ENCODE measurements at regions of chr14 and their contacts with region 1.

Region 1: GRCh38 chr14:23186913-23187654 is 3.6 kb upstream of the SLC7A8 start:
- DNase-seq: peak; percentile 34
- H3K4me3 Mint-ChIP-seq: no peak overlapping the region
- H3K27ac Mint-ChIP-seq: no peak overlapping the region
- H3K4me1 Mint-ChIP-seq: no peaks in the 10 kb centered on the region
- H3K27me3 Mint-ChIP-seq: peaks cover 20% of the 10 kb centered on the region
- CTCF ChIP-seq: peak; percentile 34

Region 2: DNA sequence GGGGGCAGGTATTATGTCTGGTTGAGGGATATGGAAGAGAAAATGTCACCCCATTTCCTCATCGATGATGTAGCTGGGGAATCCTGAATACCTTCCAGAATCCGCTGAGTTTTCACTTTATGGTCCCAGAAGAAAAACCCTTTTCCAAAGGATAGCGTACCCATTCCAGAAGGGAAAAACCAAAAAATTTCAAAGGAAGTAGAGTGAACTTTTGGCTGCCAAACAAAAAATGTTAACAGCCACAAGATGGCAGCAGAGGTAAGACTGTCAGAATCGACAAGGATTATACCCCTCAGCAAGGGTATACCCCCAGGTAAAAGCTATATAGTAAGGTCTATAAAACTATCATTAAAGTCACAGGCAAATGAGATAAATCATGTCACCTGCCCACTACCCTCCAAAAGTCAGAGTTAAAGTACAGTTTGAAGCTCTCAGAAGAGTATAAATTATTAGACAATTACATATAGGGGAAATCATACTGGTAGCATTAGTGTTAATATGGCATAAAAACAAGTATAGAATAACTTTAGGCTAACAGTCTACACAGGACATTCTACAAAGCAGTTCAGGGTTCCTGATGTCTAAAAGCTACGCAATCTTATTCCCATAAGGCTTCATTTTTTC is 110.2 kb before region 1 on chr14:
- CTCF ChIA-PET with region 1: no interaction called
- intact Hi-C with region 1: loop called (anchors 2 kb)
- DNase-seq: no peak
- H3K4me3 Mint-ChIP-seq: no peak overlapping the region
- H3K27ac Mint-ChIP-seq: no peak overlapping the region
- H3K4me1 Mint-ChIP-seq: peaks cover 29% of the 10 kb centered on the region
- H3K27me3 Mint-ChIP-seq: no peaks in the 10 kb centered on the region
- CTCF ChIP-seq: peak; percentile 36

Region 3: GRCh38 chr14:23120541-23121251 is 66.4 kb before region 1 on chr14:
- CTCF ChIA-PET with region 1: interaction called, 46 read pairs
- intact Hi-C with region 1: loop called (anchors 1 kb)
- DNase-seq: peak; percentile 89
- H3K4me3 Mint-ChIP-seq: no peak overlapping the region
- H3K27ac Mint-ChIP-seq: no peak overlapping the region
- H3K4me1 Mint-ChIP-seq: peaks cover 24% of the 10 kb centered on the region
- H3K27me3 Mint-ChIP-seq: peaks cover 52% of the 10 kb centered on the region
- CTCF ChIP-seq: peak; percentile 95

Measured in Calu3 (cell line).